ENCODE measurements at regions of chrX and their contacts with region 1.

Region 1: DNA sequence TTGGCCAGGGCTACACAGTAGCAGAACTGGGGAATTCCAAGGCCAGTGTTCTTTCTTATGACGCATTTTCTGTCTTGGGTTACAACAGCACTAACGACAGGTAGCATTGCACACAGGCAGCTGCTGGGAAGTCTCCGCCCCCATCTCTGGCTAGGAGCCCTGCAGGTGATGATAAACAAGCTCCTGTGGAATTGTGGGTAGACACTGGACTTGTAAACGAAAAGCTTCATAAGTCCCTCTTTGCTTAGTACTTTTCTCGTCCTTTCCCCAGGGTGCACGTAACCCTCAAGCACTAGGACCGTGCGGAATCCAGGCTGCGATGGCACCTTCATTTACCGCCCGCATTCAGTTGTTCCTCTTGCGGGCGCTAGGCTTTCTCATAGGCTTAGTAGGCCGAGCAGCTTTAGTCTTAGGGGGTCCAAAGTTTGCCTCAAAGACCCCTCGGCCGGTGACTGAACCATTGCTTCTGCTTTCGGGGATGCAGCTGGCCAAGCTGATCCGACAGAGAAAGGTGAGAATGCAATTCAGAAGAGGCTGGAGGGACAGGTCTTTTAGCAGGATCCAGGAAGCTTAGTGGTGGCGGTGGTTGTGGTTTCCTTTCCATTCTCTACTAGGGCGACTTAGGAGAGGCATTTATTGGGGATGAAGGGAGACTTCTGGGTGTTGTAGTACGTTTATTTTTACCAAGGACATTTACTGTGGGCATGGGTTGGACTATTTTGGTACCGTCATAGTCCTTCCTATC is at the start of gene FAAH2:
- DNase-seq: peak; percentile 86
- H3K4me3 Mint-ChIP-seq: peak within 1 kb of the TSS; percentile 91
- H3K27ac Mint-ChIP-seq: peak within 1 kb of the TSS; percentile 88
- H3K4me1 Mint-ChIP-seq: peaks cover 36% of the 10 kb centered on the region
- H3K27me3 Mint-ChIP-seq: no peaks in the 10 kb centered on the region
- total RNA-seq, gene FAAH2: 4.0 and 5.0 TPM in 2 replicates

Region 2: DNA sequence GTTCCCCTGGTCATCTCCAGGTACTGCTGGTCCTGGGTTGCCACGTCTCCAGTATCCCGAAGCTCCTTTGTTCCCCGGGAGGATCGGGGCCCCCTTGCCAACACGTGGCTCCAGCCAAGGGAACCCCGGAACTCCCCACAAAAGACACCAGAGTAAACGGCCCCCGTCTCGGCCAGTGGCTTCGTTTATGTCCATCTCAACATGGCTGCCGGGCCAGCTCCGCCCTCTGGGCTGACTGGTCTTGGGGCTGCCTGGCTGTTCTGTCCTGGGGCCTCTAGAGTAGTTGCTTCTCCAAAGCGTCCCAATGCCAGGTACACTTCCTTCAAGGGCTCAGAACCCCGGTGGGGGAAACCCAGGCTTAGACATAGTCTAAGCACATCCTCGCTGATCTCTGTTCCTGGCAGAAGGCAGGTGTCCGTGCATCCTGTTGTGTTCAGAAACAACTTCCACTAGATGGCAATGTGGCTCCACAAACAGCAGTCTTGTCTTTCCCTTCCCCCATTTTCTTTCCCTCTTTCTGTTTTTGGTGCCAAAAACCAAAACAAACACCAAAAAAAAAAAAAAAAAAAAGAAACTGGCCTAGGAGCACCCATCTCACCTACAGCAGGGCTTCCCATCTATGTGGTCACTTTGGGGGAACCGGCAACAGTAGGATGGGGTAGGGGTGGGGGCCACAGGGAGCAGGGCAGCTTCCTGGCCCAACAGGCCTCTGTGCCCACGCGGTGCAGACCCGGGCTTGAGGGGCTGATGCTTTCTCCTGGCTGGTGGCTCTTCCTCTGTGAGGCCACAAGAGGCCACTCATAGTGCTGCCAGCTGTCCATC is 522.3 kb before region 1 on chrX:
- intact Hi-C with region 1: loop called (anchors 5 kb)
- DNase-seq: peak; percentile 92
- H3K4me3 Mint-ChIP-seq: peak overlapping the region; percentile 85
- H3K27ac Mint-ChIP-seq: peak overlapping the region; percentile 96
- H3K4me1 Mint-ChIP-seq: peaks cover 46% of the 10 kb centered on the region
- H3K27me3 Mint-ChIP-seq: no peaks in the 10 kb centered on the region

Region 3: DNA sequence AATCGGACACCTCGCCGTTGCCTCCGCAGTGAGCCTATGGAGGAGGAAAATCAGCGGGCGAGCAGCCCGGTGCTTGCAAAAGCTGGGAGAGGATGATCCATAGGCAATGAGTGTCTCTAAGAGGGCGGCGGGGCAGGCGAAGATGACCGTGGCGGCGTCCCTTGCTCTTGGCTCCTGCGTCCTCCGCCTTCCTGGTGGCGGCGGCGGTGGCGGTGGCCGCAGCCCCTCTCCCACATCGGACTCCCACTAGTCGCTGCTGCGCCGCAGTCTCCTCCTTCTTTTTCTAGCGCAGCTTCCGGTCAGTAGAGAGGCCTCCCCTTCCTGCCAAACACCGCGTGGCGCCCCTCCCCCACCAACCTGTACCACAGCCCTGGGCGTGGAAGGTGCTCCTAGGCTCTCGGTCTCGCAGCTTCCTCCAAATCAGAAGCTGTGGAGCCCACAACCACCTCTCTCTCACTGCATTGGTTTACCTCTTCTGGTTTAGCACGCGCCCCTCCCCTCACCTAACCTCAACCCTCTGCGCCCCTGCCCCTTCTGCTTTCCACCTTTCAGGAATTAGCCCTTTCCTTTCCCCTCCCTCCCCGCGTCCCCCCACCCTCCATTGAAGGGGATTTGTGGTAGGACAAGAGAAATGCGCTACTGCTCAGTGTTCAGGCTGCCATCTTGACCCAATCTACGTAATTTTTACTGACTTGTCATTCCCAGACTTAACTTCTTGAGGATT is 291.2 kb before region 1 on chrX and contains the start of gene SPIN3:
- intact Hi-C with region 1: loop called (anchors 5 kb)
- DNase-seq: peak; percentile 86
- H3K4me3 Mint-ChIP-seq: peak within 1 kb of the TSS; percentile 87
- H3K27ac Mint-ChIP-seq: peak within 1 kb of the TSS; percentile 91
- H3K4me1 Mint-ChIP-seq: peaks cover 25% of the 10 kb centered on the region
- H3K27me3 Mint-ChIP-seq: no peaks in the 10 kb centered on the region
- total RNA-seq, gene SPIN3: 9.3 and 9.5 TPM in 2 replicates

Region 4: DNA sequence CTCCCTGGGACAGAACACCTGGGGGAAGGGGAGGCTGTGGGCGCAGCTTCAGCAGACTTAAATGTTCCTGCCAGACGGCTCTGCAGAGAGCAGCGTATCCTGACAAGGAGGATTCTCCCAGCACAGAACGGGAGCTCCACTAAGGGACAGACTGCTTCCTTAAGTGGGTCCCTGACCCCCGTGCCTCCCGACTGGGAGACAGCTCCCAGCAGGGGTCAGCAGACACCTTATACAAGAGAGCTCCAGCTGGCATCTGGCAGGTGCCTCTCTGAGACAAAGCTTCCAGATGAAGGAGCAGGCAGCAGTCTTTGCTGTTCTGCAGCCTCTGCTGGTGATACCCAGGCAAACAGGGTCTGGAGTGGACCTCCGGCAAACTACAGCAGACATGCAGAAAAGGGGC is 44.7 kb before region 1 on chrX:
- intact Hi-C with region 1: no loop called
- DNase-seq: no peak
- H3K4me3 Mint-ChIP-seq: no peak overlapping the region
- H3K27ac Mint-ChIP-seq: no peak overlapping the region
- H3K4me1 Mint-ChIP-seq: no peaks in the 10 kb centered on the region
- H3K27me3 Mint-ChIP-seq: no peaks in the 10 kb centered on the region

Region 5: DNA sequence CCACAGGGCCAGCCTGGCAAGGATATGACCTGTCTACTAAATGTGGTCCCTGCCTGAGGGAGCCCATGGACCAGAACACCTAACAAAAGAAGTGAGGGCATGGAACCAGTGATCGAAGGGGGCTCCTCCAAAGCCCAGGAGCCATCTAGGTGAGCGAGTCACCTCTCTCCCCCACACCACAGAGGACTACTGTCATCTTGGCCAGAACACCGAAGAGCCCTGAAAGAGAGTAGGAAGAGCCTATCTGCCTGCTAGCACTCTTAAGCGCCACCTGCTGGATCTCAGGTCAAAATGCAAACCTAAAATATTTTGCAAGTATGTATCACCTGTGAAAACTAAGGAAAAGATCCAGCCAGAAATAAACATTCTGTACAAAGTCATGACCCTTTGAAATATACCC is 167.2 kb after region 1 on chrX:
- intact Hi-C with region 1: loop called (anchors 2 kb)
- DNase-seq: peak; percentile 67
- H3K4me3 Mint-ChIP-seq: no peak overlapping the region
- H3K27ac Mint-ChIP-seq: no peak overlapping the region
- H3K4me1 Mint-ChIP-seq: peaks cover 4% of the 10 kb centered on the region
- H3K27me3 Mint-ChIP-seq: no peaks in the 10 kb centered on the region

Region 6: DNA sequence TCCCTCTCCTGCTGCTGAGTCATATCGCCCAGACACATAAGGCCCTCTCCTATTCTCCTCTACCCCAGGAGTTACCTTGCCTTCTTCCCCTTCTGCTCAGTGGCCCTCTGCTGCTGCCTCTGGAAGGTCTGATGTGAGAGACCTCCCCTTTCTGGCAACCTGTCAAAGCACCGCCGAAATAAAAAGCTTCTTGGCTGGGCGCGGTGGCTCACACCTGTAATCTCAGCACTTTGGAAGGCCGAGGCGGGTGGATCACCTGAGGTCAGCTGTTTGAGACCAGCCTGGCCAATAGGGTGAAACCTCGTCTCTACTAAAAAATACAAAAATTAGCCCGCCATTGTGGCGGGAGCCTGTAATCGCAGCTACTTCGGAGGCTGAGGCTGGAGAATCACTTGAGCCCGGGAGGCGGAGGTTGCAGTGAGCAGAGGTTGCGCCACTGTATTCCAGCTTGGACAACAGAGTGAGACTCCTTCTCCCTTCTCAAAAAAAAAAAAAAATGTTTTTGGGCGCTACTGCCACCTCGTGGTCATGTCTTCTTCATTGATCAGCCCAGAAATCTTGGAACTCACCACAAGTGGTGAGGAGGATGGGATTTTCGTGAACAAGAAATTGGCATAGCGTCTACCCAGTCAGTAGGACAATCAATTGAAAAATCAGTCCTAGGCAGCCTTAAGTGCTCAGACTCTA is 632.2 kb after region 1 on chrX:
- intact Hi-C with region 1: loop called (anchors 10 kb)
- DNase-seq: peak; percentile 81
- H3K4me3 Mint-ChIP-seq: no peak overlapping the region
- H3K27ac Mint-ChIP-seq: no peak overlapping the region
- H3K4me1 Mint-ChIP-seq: no peaks in the 10 kb centered on the region
- H3K27me3 Mint-ChIP-seq: no peaks in the 10 kb centered on the region

Measured in activated CD4-positive, alpha-beta T cell treated with anti-CD3 and anti-CD28 coated beads, Interleukin-2, amount 10 ng/mL, durations not matched to agents 24 days and 14 days (primary cell).